Activated CD4-positive, alpha-beta T cell treated with anti-CD3 and anti-CD28 coated beads for 36 hours (primary cell): ENCODE measurements at regions of chr16 and their contacts with region 1.

Region 1: GRCh38 chr16:15482068-15482747 is 47.8 kb downstream of the BMERB1 start:
- DNase-seq: peak; percentile 75
- ATAC-seq: peak; percentile 96
- H3K4me3 Mint-ChIP-seq: no peak overlapping the region
- H3K27ac Mint-ChIP-seq: peak overlapping the region; percentile 61
- H3K4me1 Mint-ChIP-seq: peaks cover 24% of the 10 kb centered on the region
- H3K27me3 Mint-ChIP-seq: peaks cover 2% of the 10 kb centered on the region

Region 2: GRCh38 chr16:15553313-15554088 is 71.3 kb after region 1 on chr16:
- CTCF ChIA-PET with region 1: no interaction called
- POLR2A ChIA-PET with region 1: no interaction called
- intact Hi-C with region 1: loop called in 1 of 2 experiments (anchors 2 kb)
- DNase-seq: peak; percentile 72
- ATAC-seq: peak; percentile 81
- H3K4me3 Mint-ChIP-seq: no peak overlapping the region
- H3K27ac Mint-ChIP-seq: peak overlapping the region; percentile 5
- H3K4me1 Mint-ChIP-seq: peaks cover 28% of the 10 kb centered on the region
- H3K27me3 Mint-ChIP-seq: no peaks in the 10 kb centered on the region

Region 3: GRCh38 chr16:15714393-15715172 is 232.4 kb after region 1 on chr16:
- CTCF ChIA-PET with region 1: no interaction called
- POLR2A ChIA-PET with region 1: no interaction called
- intact Hi-C with region 1: no loop called
- DNase-seq: no peak
- ATAC-seq: no peak
- H3K4me3 Mint-ChIP-seq: no peak overlapping the region
- H3K27ac Mint-ChIP-seq: no peak overlapping the region
- H3K4me1 Mint-ChIP-seq: peaks cover 3% of the 10 kb centered on the region
- H3K27me3 Mint-ChIP-seq: no peaks in the 10 kb centered on the region